ENCODE measurements at regions of chr1 and their contacts with region 1.

Region 1: GRCh38 chr1:179369751-179370341 is 4.1 kb downstream of the AXDND1 start:
- DNase-seq: peak; percentile 63
- H3K4me3 ChIP-seq: no peak overlapping the region
- H3K27ac ChIP-seq: no peak overlapping the region
- H3K4me1 ChIP-seq: 0 out of 4 replicates have a peak, but pooled peaks cover 0 to 4% of the 10 kb centered on the region in 2 experiments
- H3K27me3 ChIP-seq: no peaks in the 10 kb centered on the region
- CTCF ChIP-seq: peak; percentile 79
- EP300 ChIP-seq: no peak
- RAD21 ChIP-seq: peak; percentile 85

Region 2: GRCh38 chr1:179081687-179082332 is 288.0 kb before region 1 on chr1 and contains the start of gene TOR3A:
- CTCF ChIA-PET with region 1: interaction called, 63 read pairs
- POLR2A ChIA-PET with region 1: no interaction called
- DNase-seq: peak; percentile 94
- H3K4me3 ChIP-seq: peak within 1 kb of the TSS; percentile 81 to 84
- H3K27ac ChIP-seq: peak within 1 kb of the TSS; percentile 73
- H3K4me1 ChIP-seq: peaks cover 0 to 13% of the 10 kb centered on the region in 2 experiments; a peak in 1 of 4 replicates
- H3K27me3 ChIP-seq: no peaks in the 10 kb centered on the region
- CTCF ChIP-seq: no peak
- EP300 ChIP-seq: no peak
- RAD21 ChIP-seq: no peak
- polyA plus RNA-seq, gene TOR3A: 29.9 and 33.2 TPM in 2 replicates

Region 3: GRCh38 chr1:179121159-179121938 is 248.5 kb before region 1 on chr1:
- CTCF ChIA-PET with region 1: interaction called, 31 read pairs
- POLR2A ChIA-PET with region 1: no interaction called
- DNase-seq: peak; percentile 42
- H3K4me3 ChIP-seq: no peak overlapping the region
- H3K27ac ChIP-seq: peak overlapping the region in 1 of 2 experiments; percentile 54; a peak in 2 of 4 replicates
- H3K4me1 ChIP-seq: peaks cover 4 to 9% of the 10 kb centered on the region in 2 experiments; a peak in 3 of 4 replicates
- H3K27me3 ChIP-seq: no peaks in the 10 kb centered on the region
- CTCF ChIP-seq: peak; percentile 81
- EP300 ChIP-seq: no peak
- RAD21 ChIP-seq: peak; percentile 78

Region 4: GRCh38 chr1:179251675-179252074 is 118.2 kb before region 1 on chr1:
- CTCF ChIA-PET with region 1: interaction called, 34 read pairs
- POLR2A ChIA-PET with region 1: no interaction called
- DNase-seq: peak; percentile 42
- H3K4me3 ChIP-seq: no peak overlapping the region
- H3K27ac ChIP-seq: no peak overlapping the region
- H3K4me1 ChIP-seq: no peaks in the 10 kb centered on the region
- H3K27me3 ChIP-seq: no peaks in the 10 kb centered on the region
- CTCF ChIP-seq: peak; percentile 61
- EP300 ChIP-seq: no peak
- RAD21 ChIP-seq: peak; percentile 83

Region 5: DNA sequence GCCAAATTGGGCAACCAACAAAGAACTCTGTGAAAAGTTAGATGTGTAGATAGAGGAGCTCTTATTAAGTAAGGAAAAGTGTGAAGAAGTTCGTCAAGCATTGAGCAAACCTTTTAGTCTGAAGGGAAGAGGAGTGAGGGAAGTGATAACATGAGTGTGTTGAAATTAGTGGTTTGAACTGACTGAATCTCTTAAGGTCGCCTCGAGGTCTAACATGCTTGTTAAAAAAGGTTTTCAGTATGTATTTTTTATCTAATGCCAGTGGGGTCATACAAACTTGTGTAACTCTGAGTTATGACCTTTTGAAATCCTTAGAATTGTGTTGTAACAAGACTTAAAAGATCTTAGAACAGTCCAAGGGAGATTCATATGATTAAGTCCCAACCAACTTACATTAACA is 42.2 kb before region 1 on chr1:
- CTCF ChIA-PET with region 1: no interaction called
- POLR2A ChIA-PET with region 1: no interaction called
- DNase-seq: no peak
- H3K4me3 ChIP-seq: no peak overlapping the region
- H3K27ac ChIP-seq: no peak overlapping the region
- H3K4me1 ChIP-seq: no peaks in the 10 kb centered on the region; a peak in 1 of 4 replicates
- H3K27me3 ChIP-seq: no peaks in the 10 kb centered on the region
- CTCF ChIP-seq: no peak
- EP300 ChIP-seq: no peak
- RAD21 ChIP-seq: no peak